Gastrocnemius medialis (tissue), 4 donors: ENCODE measurements at regions of chr22 and their contacts with region 1.

Region 1: GRCh38 chr22:43955040-43955882 is at the start of gene SAMM50:
- DNase-seq: peak; percentile 90
- ATAC-seq: peak; percentile 92 to 95
- H3K4me3 ChIP-seq: peak within 1 kb of the TSS; percentile 81 to 99 (median 94)
- H3K27ac ChIP-seq: peak within 1 kb of the TSS; percentile 92 to 95 (median 93)
- H3K4me1 ChIP-seq: peaks cover 28 to 32% of the 10 kb centered on the region in 2 donors
- H3K27me3 ChIP-seq: no peaks in the 10 kb centered on the region
- CTCF ChIP-seq: peak in 1 of 5 experiments; percentile 26
- POLR2A ChIP-seq: peak; percentile 67 to 81
- total RNA-seq, gene SAMM50: 67.4 to 104 (median 72.0) TPM

Region 2: DNA sequence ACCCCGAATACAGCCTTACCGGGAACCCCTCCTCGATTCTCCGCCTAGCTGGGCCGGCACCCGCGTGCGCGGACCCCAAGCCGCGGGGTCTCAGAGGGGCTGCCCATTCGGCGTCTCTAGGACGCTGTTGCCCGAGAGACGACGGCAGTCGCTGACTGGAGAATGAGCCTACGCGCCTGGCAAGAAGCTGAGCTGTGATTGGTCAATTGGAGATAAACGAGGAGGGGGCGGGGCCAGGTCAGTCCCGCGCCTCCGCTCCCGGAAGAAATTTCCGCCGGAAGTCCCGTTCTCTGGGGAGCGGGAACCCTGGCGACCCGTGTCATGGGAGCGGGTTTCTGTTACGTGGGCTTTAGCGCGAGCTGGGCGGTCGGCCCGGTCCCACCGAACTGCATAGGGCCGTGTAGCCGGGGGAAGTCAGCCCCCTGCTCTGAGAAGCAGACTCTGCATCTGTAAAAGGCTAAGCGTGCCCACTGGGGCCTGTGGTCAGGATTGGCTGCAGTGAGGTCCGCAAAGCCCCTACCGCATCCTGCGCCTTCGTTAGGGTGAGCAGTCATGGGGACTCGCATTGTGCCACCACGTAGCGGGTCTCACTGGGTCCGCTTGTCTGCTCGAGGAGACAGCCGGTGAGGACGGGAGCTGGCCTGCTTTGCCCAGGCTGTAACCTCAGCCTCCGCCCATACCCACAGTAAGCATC is 143.0 kb before region 1 on chr22 and contains the start of gene EFCAB6:
- in situ Hi-C with region 1: no loop called
- intact Hi-C with region 1: loop called (anchors 10 kb)
- DNase-seq: peak; percentile 89 to 91
- ATAC-seq: peak; percentile 98 to 99
- H3K4me3 ChIP-seq: peak within 1 kb of the TSS; percentile 76 to 94 (median 90)
- H3K27ac ChIP-seq: peak within 1 kb of the TSS; percentile 70 to 82 (median 80)
- H3K4me1 ChIP-seq: peaks cover 9 to 18% of the 10 kb centered on the region in 2 donors
- H3K27me3 ChIP-seq: no peaks in the 10 kb centered on the region
- CTCF ChIP-seq: no peak
- POLR2A ChIP-seq: peak; percentile 34 to 39
- total RNA-seq, gene EFCAB6: 0.07 to 4.4 (median 0.28) TPM

Region 3: GRCh38 chr22:43923631-43924464 is 31.4 kb before region 1 on chr22 and contains the start of gene PNPLA3:
- in situ Hi-C with region 1: no loop called
- intact Hi-C with region 1: loop called (anchors 2 kb)
- DNase-seq: peak; percentile 86
- ATAC-seq: peak; percentile 64 to 79
- H3K4me3 ChIP-seq: peak within 1 kb of the TSS; percentile 58 to 80 (median 68)
- H3K27ac ChIP-seq: peak within 1 kb of the TSS; percentile 57 to 80 (median 65)
- H3K4me1 ChIP-seq: peaks cover 7 to 24% of the 10 kb centered on the region in 2 donors
- H3K27me3 ChIP-seq: peaks cover 0 to 9% (median 0%) of the 10 kb centered on the region in 3 donors
- CTCF ChIP-seq: peak in 2 of 5 experiments; percentile 13 to 35
- POLR2A ChIP-seq: peak; percentile 83 to 87
- total RNA-seq, gene PNPLA3: 0.58 to 2.3 (median 1.4) TPM in 3 of 4 donors, not detected in the other

Region 4: DNA sequence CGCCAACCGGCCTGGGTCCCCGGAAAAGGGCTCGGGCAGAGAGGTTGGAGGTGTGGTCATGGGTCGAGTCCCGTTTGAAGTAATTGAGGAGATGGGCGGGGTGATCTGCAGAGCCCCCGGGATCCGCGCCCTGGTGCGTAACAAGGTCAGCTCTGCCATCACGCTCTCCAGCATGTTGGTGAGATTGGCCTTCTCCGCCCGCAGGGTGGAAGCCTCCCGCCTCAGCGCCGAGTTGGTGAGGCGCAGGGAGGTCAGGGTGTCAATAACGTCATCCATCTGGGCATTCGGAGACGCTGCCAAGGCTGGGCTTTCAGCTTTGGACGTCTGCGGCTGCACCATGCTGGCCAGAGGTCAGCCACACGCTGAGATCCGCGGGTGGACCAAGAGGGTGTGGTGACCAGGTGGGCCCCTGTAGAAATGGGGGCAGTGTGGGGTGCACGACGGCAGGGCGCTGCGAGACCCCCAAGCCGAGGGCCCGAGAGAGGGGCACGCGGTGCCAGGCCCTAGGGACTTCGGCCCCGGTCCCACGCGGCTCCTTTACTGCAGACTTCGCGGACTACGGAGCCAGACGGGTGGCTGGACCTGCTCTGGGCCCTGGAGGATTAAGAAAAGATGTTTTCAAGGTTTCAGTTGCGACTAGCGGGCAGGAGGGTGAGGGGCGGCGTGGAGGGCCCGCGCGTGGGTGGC is 542.1 kb after region 1 on chr22:
- in situ Hi-C with region 1: no loop called
- intact Hi-C with region 1: loop called (anchors 5 kb)
- DNase-seq: no peak
- ATAC-seq: peak; percentile 8 to 13
- H3K4me3 ChIP-seq: peak overlapping the region; percentile 57 to 90 (median 68)
- H3K27ac ChIP-seq: peak overlapping the region; percentile 63 to 88 (median 82)
- H3K4me1 ChIP-seq: peaks cover 15% of the 10 kb centered on the region in 2 donors
- H3K27me3 ChIP-seq: peaks cover 0 to 4% (median 0%) of the 10 kb centered on the region in 3 donors
- CTCF ChIP-seq: no peak
- POLR2A ChIP-seq: no peak